Naive thymus-derived CD4-positive, alpha-beta T cell (primary cell): ENCODE measurements at regions of chr18 and their contacts with region 1.

Region 1: DNA sequence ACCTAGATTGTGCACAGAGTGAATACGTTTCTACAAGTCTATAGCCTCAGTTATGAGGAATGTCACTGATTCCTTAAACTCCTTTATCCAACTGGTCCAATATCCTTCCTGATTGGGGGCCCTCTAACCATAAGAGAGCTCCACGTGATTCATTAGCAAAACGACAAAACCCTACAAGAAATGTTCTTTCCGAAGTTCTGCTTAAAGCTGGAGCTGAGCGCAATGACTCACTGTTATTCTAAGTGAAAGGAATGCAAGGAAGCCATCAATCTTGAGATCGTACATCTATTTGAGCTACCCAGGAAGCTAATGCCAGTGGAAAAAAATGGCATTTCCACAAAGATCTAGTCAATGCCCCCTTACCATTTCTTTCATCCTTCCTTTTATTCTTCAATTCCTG is 354.9 kb upstream of the CDH20 start:
- DNase-seq: no peak
- ATAC-seq: no peak
- H3K4me3 ChIP-seq: no peak overlapping the region
- H3K4me3 Mint-ChIP-seq: no peak overlapping the region
- H3K27ac ChIP-seq: no peak overlapping the region
- H3K27ac Mint-ChIP-seq: no peak overlapping the region
- H3K4me1 ChIP-seq: no peaks in the 10 kb centered on the region
- H3K4me1 Mint-ChIP-seq: no peaks in the 10 kb centered on the region
- H3K27me3 ChIP-seq: no peaks in the 10 kb centered on the region
- H3K27me3 Mint-ChIP-seq: no peaks in the 10 kb centered on the region

Region 2: DNA sequence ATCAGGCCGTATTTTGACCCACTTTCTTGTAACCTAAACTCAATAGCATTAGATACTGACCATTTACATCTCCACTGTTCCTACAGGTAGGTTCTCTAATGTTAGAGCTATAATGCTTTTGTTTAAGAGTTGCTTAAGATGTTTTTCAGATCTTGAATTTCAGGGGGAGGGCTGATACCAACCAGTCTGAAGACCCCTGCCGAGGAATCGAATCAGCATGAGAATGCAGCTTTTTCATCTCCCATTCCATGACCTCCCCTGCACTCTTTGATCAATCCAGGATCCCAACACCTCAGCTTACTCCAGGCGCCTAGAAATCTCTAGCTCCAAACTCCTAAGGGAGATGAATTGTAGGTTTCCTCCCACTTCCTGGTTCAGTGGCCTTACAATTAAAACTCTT is 485.3 kb before region 1 on chr18:
- CTCF ChIA-PET with region 1: no interaction called
- POLR2A ChIA-PET with region 1: no interaction called
- intact Hi-C with region 1: loop called in 1 of 2 experiments (anchors 5 kb)
- DNase-seq: no peak
- ATAC-seq: no peak
- H3K4me3 ChIP-seq: no peak overlapping the region
- H3K4me3 Mint-ChIP-seq: no peak overlapping the region
- H3K27ac ChIP-seq: no peak overlapping the region
- H3K27ac Mint-ChIP-seq: no peak overlapping the region
- H3K4me1 ChIP-seq: no peaks in the 10 kb centered on the region
- H3K4me1 Mint-ChIP-seq: no peaks in the 10 kb centered on the region
- H3K27me3 ChIP-seq: no peaks in the 10 kb centered on the region
- H3K27me3 Mint-ChIP-seq: no peaks in the 10 kb centered on the region